H1 (cell line): ENCODE measurements at regions of chr12 and their contacts with region 1.

Region 1: GRCh38 chr12:124053851-124054250 is 80.8 kb downstream of the ZNF664 start:
- DNase-seq: peak; percentile 61 to 63
- H3K4me3 ChIP-seq: no peak overlapping the region
- H3K27ac ChIP-seq: no peak overlapping the region
- H3K4me1 ChIP-seq: no peaks in the 10 kb centered on the region
- H3K27me3 ChIP-seq: no peaks in the 10 kb centered on the region
- CTCF ChIP-seq: peak; percentile 75 to 83 (median 80)
- EP300 ChIP-seq: no peak
- POLR2A ChIP-seq: no peak
- RAD21 ChIP-seq: peak; percentile 98 to 99

Region 2: DNA sequence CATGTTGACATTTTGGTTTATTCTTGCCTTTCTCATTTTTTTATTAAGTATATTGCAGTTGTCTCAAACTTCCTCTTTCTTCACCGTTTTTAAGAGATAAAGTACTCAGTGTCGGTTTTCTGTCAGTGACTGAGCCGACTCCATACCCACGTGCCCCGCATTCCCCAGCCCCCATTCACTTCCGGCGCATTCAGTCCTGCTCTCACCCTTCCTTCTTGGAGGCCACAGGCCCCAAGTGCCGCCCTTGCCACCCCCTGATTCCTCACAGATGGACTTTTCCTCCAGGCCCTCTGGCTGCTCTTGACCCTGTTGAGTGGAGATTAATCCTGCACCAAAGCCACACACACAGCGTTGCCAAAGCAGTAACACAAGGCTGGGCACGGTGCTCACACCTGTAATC is 310.8 kb before region 1 on chr12:
- CTCF ChIA-PET with region 1: no interaction called
- POLR2A ChIA-PET with region 1: no interaction called
- DNase-seq: no peak
- H3K4me3 ChIP-seq: no peak overlapping the region
- H3K27ac ChIP-seq: no peak overlapping the region
- H3K4me1 ChIP-seq: no peaks in the 10 kb centered on the region
- H3K27me3 ChIP-seq: no peaks in the 10 kb centered on the region
- CTCF ChIP-seq: no peak
- EP300 ChIP-seq: no peak
- POLR2A ChIP-seq: no peak
- RAD21 ChIP-seq: no peak

Region 3: DNA sequence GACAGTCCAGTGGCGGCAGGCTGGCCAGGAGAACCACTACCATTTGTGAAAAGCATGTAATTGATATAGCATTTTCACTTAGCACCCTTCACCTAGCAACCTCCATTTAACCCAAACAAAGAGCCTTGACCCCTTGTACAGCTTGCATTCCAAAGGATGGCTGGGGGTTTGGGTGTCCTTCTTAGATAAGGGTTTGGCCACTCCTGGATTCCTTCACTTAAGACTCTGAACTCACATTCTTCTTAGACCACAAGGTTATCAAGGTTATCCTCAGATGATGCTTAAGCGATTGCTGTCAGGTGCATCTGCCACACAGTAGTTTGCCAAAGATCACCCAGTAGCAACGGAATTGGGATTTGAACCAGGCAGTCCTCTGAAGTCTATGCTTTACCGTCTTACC is 22.0 kb after region 1 on chr12:
- CTCF ChIA-PET with region 1: interaction called, 15 read pairs
- POLR2A ChIA-PET with region 1: no interaction called
- DNase-seq: no peak
- H3K4me3 ChIP-seq: no peak overlapping the region
- H3K27ac ChIP-seq: no peak overlapping the region
- H3K4me1 ChIP-seq: peaks cover 0 to 12% (median 7%) of the 10 kb centered on the region in 4 experiments; a peak in 5 of 7 replicates
- H3K27me3 ChIP-seq: no peaks in the 10 kb centered on the region; a peak in 1 of 7 replicates
- CTCF ChIP-seq: no peak
- EP300 ChIP-seq: no peak
- POLR2A ChIP-seq: no peak
- RAD21 ChIP-seq: no peak

Region 4: GRCh38 chr12:124279846-124280360 is 226.1 kb after region 1 on chr12:
- CTCF ChIA-PET with region 1: interaction called, 10 read pairs
- POLR2A ChIA-PET with region 1: no interaction called
- DNase-seq: no peak
- H3K4me3 ChIP-seq: no peak overlapping the region
- H3K27ac ChIP-seq: no peak overlapping the region
- H3K4me1 ChIP-seq: peaks cover 0 to 19% (median 4%) of the 10 kb centered on the region in 4 experiments; a peak in 4 of 7 replicates
- H3K27me3 ChIP-seq: no peaks in the 10 kb centered on the region; a peak in 1 of 7 replicates
- CTCF ChIP-seq: no peak
- EP300 ChIP-seq: no peak
- POLR2A ChIP-seq: no peak
- RAD21 ChIP-seq: no peak

Region 5: GRCh38 chr12:124321040-124321481 is 267.2 kb after region 1 on chr12:
- CTCF ChIA-PET with region 1: interaction called, 78 read pairs
- POLR2A ChIA-PET with region 1: interaction called, 4 read pairs
- DNase-seq: peak; percentile 33 to 99
- H3K4me3 ChIP-seq: no peak overlapping the region
- H3K27ac ChIP-seq: no peak overlapping the region
- H3K4me1 ChIP-seq: peaks cover 6 to 21% (median 14%) of the 10 kb centered on the region in 4 experiments
- H3K27me3 ChIP-seq: no peaks in the 10 kb centered on the region; a peak in 1 of 7 replicates
- CTCF ChIP-seq: peak; percentile 92 to 96 (median 95)
- EP300 ChIP-seq: no peak
- POLR2A ChIP-seq: no peak
- RAD21 ChIP-seq: peak; percentile 96 to 97

Region 6: GRCh38 chr12:124332068-124332672 is 278.3 kb after region 1 on chr12:
- CTCF ChIA-PET with region 1: interaction called, 12 read pairs
- POLR2A ChIA-PET with region 1: no interaction called
- DNase-seq: no peak
- H3K4me3 ChIP-seq: no peak overlapping the region
- H3K27ac ChIP-seq: 0 out of 2 replicates have a peak overlapping the region, but pooled peaks have one; percentile 4
- H3K4me1 ChIP-seq: peaks cover 0 to 4% (median 0%) of the 10 kb centered on the region in 4 experiments; a peak in 2 of 7 replicates
- H3K27me3 ChIP-seq: no peaks in the 10 kb centered on the region
- CTCF ChIP-seq: peak in 2 of 3 experiments; percentile 51 to 55; a peak in 3 of 4 replicates
- EP300 ChIP-seq: no peak
- POLR2A ChIP-seq: no peak
- RAD21 ChIP-seq: peak; percentile 61 to 70